Mucosa of descending colon (tissue), 3 donors: ENCODE measurements at regions of chr1 and their contacts with region 1.

Region 1: GRCh38 chr1:233440951-233441401 is 113.5 kb downstream of the MAP3K21 start:
- DNase-seq: peak in 1 of 3 donors; percentile 21
- ATAC-seq: peak; percentile 71
- H3K4me3 ChIP-seq: no peak overlapping the region
- H3K4me1 ChIP-seq: no peaks in the 10 kb centered on the region
- CTCF ChIP-seq: peak; percentile 31

Region 2: DNA sequence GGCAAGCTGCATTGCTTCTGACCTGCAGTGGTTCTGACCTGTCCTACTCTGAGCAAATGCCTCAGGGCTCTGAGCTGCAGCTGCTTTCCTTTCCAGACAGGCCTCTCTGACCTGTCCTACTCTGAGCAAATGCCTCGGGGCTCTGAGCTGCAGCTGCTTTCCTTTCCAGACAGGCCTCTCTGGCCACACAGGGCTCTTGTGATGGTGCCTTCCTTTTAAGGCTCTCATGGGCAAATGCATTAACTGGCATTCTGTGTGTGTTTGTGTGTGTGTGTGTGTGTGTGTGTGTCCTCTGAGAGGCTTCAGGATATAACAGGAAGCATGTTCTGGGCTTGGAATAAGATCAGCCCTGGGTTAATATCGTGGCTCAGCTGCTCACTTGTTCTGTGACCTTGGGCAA is 359.2 kb before region 1 on chr1:
- intact Hi-C with region 1: no loop called
- DNase-seq: no peak
- ATAC-seq: no peak
- H3K4me3 ChIP-seq: no peak overlapping the region
- H3K4me1 ChIP-seq: no peaks in the 10 kb centered on the region
- CTCF ChIP-seq: no peak

Region 3: DNA sequence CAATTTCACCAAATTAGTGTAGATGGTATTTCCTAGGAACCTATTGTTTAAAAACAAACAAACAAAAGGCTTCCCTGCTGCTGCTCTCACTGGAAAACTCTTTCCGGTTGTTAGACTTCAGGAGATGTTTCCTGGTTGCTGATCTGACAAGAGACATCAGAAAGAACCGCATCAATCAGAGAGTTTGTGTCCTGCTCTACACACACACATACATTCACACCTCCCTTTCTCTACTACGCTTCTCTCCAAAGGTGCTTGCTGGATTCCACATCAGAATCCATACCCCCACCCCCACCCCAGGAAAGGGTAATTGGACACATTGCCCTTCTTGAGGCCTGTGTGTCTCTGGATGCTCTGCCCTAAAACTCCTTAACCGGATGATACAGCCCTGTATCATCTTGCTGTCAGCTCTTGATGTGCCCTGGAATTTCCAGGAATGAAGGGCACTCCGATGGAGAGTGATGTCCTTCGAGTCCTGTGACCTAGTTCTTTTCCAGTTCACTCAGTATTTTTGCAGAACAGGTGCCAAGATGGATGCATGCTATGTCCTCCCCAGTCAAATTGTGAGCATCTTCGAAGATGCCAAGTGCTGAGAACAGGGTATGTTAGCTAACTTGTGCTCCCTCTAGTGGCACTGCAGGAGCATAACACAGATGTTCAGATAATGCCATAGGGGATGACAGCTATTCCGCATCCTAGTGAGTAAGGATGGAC is 349.8 kb after region 1 on chr1:
- intact Hi-C with region 1: loop called in 1 of 2 experiments (anchors 2 kb)
- DNase-seq: peak in 1 of 3 donors; percentile 25
- ATAC-seq: peak; percentile 89
- H3K4me3 ChIP-seq: no peak overlapping the region
- H3K4me1 ChIP-seq: no peaks in the 10 kb centered on the region
- CTCF ChIP-seq: peak; percentile 66